Endothelial cell of umbilical vein (primary cell): ENCODE measurements at regions of chr10 and their contacts with region 1.

Region 1: DNA sequence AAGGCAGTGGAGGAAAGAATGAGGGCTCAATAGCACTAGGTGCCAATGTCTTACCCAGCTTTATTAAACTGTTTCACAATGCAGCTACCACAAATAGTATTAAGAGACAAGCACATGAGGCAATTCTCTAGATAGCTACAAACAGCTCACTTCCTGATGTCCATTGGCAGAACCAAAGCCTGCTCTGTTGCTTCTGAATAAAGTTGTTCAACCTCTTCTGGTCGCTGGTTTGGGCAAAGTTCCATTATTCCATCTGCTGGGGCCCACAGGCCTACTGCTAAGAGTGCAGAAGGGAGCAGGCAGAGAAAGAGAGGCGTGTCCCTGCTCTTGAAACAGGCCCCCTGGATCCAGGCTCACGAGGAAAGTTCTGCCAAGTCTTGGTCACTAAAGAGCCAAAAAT is 173.9 kb downstream of the ZNF438 start:
- DNase-seq: peak; percentile 50
- H3K4me3 ChIP-seq: no peak overlapping the region
- H3K27ac ChIP-seq: peak overlapping the region; percentile 97
- H3K4me1 ChIP-seq: peaks cover 63% of the 10 kb centered on the region
- H3K27me3 ChIP-seq: no peaks in the 10 kb centered on the region
- CTCF ChIP-seq: no peak
- POLR2A ChIP-seq: no peak

Region 2: DNA sequence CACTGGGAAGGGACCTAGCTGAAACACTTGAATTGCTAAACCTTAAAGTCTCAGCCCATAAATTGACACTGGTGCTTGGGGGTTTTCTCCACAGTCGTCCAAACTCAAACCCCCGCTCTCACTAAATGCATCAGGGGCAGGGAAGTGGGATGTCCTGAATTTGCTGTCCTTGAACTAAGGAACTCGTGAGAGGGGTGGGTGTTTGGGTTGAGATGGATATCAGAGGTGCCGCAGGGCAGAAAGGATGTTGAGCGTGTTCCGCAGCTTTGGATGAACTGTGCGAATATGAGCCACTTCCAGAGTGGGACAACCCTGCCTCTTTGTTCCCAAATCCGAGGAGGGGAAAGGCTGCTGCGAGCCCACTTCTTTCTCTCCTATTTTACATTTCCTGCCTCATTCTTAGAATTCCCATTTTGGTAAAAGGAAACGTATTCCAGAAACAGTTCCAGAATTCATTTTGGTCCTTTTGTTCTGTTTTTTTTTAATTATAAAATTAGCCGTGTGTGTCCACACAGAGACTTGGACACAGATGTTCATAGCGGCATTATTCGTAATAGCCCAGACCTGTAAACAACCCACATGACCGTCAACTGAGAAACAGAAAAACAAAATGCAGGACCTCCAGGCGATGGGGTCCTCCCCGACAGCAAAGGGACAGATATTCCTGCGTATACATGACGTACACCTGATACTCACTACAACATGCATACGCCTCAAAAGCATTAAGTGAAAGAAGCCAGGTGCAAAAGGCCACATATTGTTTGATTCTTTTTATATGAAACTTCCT is 137.8 kb before region 1 on chr10:
- CTCF ChIA-PET with region 1: no interaction called
- POLR2A ChIA-PET with region 1: no interaction called
- dilution Hi-C with region 1: no loop called
- intact Hi-C with region 1: no loop called
- DNase-seq: no peak
- H3K4me3 ChIP-seq: no peak overlapping the region
- H3K27ac ChIP-seq: no peak overlapping the region
- H3K4me1 ChIP-seq: no peaks in the 10 kb centered on the region
- H3K27me3 ChIP-seq: peaks cover 3 to 6% of the 10 kb centered on the region in 2 experiments
- CTCF ChIP-seq: no peak
- POLR2A ChIP-seq: no peak

Region 3: DNA sequence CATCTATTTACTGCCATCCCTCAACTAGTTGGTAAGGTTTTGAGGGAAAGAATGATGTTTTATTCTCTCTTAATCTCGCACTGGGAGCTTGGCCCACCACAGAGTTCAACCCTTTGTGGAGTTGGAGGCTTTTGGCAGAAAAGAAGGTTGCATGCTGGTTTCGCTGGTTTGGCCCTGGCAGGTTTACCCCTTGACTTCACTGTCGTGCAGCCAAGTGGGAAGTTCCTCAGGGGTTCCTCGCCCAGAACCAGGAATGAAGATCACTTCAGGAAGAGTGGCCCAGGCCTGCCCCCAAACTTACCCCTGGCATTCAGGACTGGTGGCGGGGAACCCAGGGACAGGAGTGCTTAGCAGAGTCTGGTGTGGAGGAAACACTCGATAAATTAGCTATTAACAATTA is 125.1 kb before region 1 on chr10:
- CTCF ChIA-PET with region 1: no interaction called
- POLR2A ChIA-PET with region 1: no interaction called
- dilution Hi-C with region 1: no loop called
- intact Hi-C with region 1: no loop called
- DNase-seq: no peak
- H3K4me3 ChIP-seq: no peak overlapping the region
- H3K27ac ChIP-seq: no peak overlapping the region
- H3K4me1 ChIP-seq: peaks cover 4% of the 10 kb centered on the region
- H3K27me3 ChIP-seq: no peaks in the 10 kb centered on the region
- CTCF ChIP-seq: no peak
- POLR2A ChIP-seq: no peak

Region 4: DNA sequence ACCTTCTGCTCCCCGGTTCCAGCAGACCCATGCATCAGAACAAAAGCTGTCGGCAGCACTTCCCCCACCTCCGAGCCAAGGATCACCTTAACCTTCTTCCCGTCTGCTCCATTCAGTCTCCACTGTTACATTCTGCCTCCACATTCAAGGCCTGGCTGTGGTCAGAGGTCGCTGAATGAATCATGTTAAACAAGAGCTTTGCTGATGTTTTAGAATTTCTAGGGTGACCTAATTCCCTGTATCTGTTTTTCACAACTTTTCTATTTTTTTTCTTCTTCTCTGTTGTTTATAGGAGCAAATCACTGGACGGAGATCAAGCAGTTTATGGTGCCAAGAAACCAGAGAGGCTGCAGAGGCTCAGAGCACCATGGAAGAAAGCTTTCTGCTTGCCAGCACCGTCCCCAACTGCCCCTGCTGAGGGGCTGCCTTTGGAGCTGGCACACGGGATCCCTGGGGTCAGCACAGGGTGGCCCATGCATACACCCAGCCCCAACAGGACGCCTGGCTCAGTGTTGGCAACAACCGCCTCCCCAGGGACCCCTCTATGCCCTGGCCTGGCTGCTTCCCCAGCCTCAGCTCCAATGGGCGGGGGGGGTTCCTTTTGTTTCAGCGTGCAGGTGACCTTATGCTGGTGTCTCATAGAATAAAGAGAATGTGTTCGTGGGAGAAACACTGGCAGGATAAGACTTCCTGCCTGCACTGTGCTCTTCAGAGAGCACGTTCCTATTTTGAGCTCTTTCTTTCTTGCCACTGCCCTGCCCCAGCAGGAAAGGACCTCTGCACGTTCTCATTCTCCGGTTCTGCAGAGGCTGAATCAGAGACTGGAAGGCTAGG is 45.6 kb before region 1 on chr10:
- CTCF ChIA-PET with region 1: interaction called, 6 read pairs
- POLR2A ChIA-PET with region 1: interaction called, 5 read pairs
- dilution Hi-C with region 1: no loop called
- intact Hi-C with region 1: loop called (anchors 1 kb)
- DNase-seq: peak; percentile 96
- H3K4me3 ChIP-seq: no peak overlapping the region
- H3K27ac ChIP-seq: peak overlapping the region; percentile 96
- H3K4me1 ChIP-seq: peaks cover 54% of the 10 kb centered on the region
- H3K27me3 ChIP-seq: no peaks in the 10 kb centered on the region
- CTCF ChIP-seq: no peak
- POLR2A ChIP-seq: peak; percentile 29

Region 5: DNA sequence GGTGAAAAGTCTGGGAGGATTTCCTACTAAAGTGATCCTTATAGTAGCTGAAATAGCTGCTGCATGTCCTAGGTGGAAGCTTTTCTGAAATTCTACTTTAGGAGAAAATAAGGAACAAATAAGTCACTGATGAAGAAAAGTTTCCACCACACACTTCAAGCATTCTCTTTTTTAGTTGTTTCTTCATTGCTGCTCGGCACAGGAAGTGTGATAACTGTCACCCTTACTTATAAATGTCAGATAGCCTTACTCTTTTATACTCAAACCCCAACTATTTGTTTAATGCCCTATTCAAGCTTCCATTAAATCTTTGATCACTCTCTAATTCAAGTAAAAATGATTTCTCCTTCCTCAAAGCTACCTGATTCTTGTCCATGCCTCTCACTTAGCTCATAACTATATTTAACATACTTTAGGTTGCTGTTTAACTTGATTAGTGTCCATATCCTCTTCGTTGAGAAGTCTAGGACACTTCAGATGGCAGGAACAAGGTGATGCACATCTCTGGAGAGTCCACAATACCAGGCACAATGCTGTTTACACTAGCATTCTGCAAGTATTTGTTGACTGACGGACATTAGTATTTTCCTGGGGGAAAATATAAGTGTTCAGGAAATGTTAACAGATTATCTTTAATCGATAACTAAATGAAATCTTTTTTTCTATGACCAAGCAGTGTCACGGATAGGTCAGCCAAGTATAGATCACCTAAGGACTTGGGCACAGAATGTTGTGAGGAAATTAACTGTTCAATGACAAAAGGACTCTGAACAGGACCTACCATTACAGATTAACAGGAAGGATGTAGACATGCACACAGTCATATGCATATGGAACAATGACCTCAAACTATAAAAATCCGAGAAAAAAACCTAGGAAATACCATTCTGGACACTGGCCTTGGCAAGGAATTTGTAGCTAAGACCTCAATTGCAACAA is 106.5 kb after region 1 on chr10:
- CTCF ChIA-PET with region 1: no interaction called
- POLR2A ChIA-PET with region 1: no interaction called
- dilution Hi-C with region 1: no loop called
- intact Hi-C with region 1: loop called (anchors 1 kb)
- DNase-seq: peak; percentile 81
- H3K4me3 ChIP-seq: peak overlapping the region in 1 of 3 experiments; percentile 30
- H3K27ac ChIP-seq: peak overlapping the region; percentile 99
- H3K4me1 ChIP-seq: peaks cover 45% of the 10 kb centered on the region
- H3K27me3 ChIP-seq: no peaks in the 10 kb centered on the region
- CTCF ChIP-seq: no peak
- POLR2A ChIP-seq: peak; percentile 32

Region 6: GRCh38 chr10:30999070-30999712 is 141.4 kb after region 1 on chr10:
- CTCF ChIA-PET with region 1: no interaction called
- POLR2A ChIA-PET with region 1: no interaction called
- dilution Hi-C with region 1: no loop called
- intact Hi-C with region 1: loop called (anchors 1 kb)
- DNase-seq: peak; percentile 85
- H3K4me3 ChIP-seq: peak overlapping the region in 2 of 3 experiments; percentile 29 to 76
- H3K27ac ChIP-seq: peak overlapping the region; percentile 99
- H3K4me1 ChIP-seq: peaks cover 72% of the 10 kb centered on the region
- H3K27me3 ChIP-seq: no peaks in the 10 kb centered on the region
- CTCF ChIP-seq: no peak
- POLR2A ChIP-seq: peak; percentile 80

Region 7: DNA sequence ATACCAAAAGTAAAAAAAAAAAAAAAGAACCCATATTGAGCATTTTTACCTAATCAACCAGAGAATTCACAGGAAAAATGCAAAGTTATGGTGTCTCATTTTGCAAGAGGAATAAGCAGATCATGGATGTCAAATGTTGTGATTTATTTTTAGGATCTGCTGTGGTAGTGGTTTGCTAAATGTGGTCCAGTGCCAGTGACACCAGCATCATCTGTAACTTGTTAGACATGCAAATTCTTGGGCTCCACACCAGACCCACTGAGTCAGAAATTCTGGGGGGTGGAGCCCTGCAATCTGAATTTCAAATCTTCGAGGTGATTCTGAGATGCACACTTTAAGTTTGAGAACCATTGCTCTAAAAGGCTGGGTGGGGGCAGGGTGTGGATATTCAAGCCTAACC is 431.2 kb after region 1 on chr10:
- CTCF ChIA-PET with region 1: no interaction called
- POLR2A ChIA-PET with region 1: no interaction called
- dilution Hi-C with region 1: no loop called
- intact Hi-C with region 1: no loop called
- DNase-seq: no peak
- H3K4me3 ChIP-seq: no peak overlapping the region
- H3K27ac ChIP-seq: no peak overlapping the region
- H3K4me1 ChIP-seq: no peaks in the 10 kb centered on the region
- H3K27me3 ChIP-seq: no peaks in the 10 kb centered on the region
- CTCF ChIP-seq: no peak
- POLR2A ChIP-seq: no peak

Region 8: DNA sequence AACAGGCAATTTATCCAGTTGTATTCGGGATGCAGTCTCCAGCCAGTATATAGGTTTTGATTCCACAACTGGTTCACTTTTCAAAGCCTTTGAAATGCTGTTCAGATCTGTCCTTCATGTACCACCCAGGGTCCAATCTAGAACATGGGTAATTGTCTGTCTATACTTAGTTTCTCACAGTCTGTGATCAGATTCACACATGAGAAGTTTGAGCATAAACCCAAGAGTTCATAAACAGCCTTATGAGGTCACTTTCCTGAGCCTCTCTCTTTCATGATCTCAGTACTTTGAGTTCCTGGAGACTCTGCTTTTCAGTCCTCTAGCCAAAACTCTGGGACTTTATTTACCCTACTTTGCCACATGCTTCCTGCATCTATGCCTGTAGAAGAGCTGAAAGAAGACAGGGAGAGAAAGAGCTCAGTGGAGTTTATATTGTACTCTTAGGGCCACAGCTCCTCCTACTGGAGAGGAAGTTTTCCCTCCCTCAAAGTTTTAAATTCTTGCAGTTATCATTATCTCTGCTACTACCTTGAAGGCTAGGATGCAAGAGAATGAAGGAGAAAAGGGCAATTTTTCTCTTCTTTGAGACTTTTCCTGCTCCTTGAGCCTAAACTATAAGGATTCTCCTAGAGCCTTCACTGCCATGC is 633.2 kb after region 1 on chr10:
- CTCF ChIA-PET with region 1: interaction called, 3 read pairs
- POLR2A ChIA-PET with region 1: no interaction called
- dilution Hi-C with region 1: no loop called
- intact Hi-C with region 1: loop called (anchors 5 kb)
- DNase-seq: peak; percentile 63
- H3K4me3 ChIP-seq: no peak overlapping the region
- H3K27ac ChIP-seq: peak overlapping the region; percentile 7
- H3K4me1 ChIP-seq: peaks cover 13% of the 10 kb centered on the region
- H3K27me3 ChIP-seq: no peaks in the 10 kb centered on the region
- CTCF ChIP-seq: peak; percentile 50 to 53
- POLR2A ChIP-seq: no peak